ENCODE measurements at regions of chr5 and their contacts with region 1.

Region 1: GRCh38 chr5:138985256-138985655 is 110.1 kb upstream of the LRRTM2 start:
- DNase-seq: peak; percentile 0
- ATAC-seq: no peak
- H3K4me3 ChIP-seq: no peak overlapping the region
- H3K27ac ChIP-seq: no peak overlapping the region
- H3K4me1 ChIP-seq: no peaks in the 10 kb centered on the region
- H3K27me3 ChIP-seq: no peaks in the 10 kb centered on the region
- CTCF ChIP-seq: no peak

Region 2: DNA sequence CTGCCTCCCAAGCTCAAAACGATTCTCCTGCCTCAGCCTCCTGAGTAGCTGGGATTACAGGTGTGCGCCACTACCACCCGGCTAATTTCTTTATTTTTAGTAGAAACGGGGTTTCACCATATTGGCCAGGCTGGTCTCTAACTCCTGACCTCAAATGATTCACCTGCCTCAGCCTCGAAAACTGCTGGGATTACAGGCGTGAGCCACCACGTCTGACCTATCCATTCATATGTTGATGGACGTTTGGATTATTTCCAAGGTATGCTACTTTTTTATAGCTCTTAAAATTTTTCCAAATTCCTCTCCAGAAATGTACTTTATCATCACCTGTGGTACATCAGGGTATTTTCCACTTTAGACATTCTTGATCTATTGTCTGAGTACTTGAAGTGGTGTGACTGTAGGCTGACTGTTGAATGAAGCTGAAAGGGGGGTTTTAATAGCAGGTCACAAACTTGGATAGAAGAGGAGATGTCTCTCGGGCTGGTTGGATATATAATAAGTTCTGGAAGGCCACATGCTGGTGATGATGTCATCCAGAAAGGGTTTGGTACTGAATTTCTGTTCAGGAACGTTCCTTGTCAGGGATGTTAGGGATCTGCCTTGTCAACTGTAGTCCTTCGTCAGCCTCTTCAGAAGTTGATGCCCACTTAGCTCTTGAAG is 224.7 kb before region 1 on chr5:
- CTCF ChIA-PET with region 1: no interaction called
- POLR2A ChIA-PET with region 1: interaction called, 11 read pairs
- intact Hi-C with region 1: no loop called
- DNase-seq: peak; percentile 31
- ATAC-seq: peak; percentile 22; the same call in 1 of the 2 replicates
- H3K4me3 ChIP-seq: no peak overlapping the region
- H3K27ac ChIP-seq: no peak overlapping the region
- H3K4me1 ChIP-seq: peaks cover 7% of the 10 kb centered on the region
- H3K27me3 ChIP-seq: no peaks in the 10 kb centered on the region
- CTCF ChIP-seq: no peak

Region 3: DNA sequence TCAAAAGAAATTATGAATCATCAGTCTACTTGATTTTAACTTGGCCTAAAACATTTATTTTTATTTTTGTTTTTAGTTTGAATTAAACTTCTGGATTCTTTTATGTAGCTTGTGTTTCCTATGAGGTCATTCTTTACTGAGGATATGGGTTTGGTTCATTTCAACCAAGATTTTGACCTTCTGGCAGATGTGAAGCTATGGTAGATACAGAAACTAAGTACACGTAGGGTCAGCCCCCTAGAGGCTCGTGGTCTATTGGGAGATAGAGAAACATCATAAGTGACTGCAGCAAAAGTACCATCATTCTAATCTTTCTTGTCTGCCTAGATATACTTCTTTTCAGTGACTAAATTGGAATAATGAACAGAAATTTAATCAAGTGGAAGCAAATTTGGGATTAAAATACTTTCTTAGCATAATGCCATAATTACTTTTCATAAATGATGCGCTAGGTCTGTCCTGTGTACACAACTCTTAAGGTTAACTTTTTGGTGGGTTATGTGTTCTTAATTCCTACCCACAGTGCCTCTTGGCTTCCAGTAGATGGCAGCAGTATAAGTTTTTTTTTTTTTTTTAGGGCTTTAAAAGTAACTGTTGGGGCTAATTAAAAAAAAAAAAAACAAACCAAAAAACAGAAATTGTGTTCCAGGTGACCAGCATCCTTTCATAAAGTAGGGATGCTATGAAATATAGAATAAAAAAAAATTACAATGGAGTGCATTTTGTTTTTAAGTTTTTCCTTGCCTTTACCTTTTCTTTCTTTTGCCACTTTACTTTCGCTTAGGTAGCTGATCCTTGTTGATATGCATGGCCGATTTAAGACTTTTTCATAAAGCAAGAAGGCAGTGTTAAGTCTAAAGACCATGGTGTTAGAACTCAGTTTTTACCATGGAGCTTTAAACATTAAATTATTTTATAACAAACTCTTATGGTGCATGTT is 160.1 kb before region 1 on chr5:
- CTCF ChIA-PET with region 1: no interaction called
- POLR2A ChIA-PET with region 1: no interaction called
- intact Hi-C with region 1: no loop called
- DNase-seq: no peak
- ATAC-seq: no peak
- H3K4me3 ChIP-seq: no peak overlapping the region
- H3K27ac ChIP-seq: no peak overlapping the region
- H3K4me1 ChIP-seq: no peaks in the 10 kb centered on the region
- H3K27me3 ChIP-seq: no peaks in the 10 kb centered on the region
- CTCF ChIP-seq: no peak

Region 4: DNA sequence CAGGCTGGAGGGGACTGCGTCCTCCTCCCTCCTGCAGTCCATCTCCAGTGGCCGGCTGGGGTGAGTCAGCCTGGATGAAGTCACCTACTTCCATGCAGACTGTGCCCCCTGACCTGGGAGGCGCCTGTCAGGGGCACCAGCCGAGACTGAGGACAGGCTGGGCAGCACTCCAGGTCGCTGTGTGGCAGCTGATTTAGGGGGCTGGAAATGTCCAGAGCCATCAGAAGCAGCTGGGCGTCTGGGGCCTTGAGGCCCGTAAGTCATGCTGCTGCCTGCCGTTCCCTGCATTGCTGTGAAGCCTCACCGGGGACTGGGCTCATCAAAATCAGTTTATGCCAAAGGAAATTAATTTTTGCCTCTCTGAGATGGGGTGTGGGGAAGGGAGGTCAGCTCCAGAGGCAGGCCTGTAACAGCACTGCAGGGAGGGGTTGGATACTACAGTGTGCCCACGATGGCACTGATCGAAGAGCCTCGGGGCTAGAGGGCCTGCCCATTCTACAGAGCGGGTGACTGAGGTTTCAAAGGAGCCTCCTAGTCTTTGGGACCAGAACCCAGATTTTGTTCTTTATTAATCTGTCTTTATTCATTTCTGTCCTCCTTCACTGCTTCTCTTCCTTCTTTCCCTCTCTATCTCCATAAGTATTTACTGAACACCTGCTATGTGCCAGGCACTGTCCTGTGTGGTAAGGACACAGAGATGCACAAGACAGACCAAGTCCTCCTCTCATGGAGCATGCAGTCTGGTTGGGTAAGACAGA is 740.0 kb after region 1 on chr5:
- CTCF ChIA-PET with region 1: no interaction called
- POLR2A ChIA-PET with region 1: no interaction called
- intact Hi-C with region 1: no loop called
- DNase-seq: peak; percentile 35
- ATAC-seq: peak; percentile 92
- H3K4me3 ChIP-seq: no peak overlapping the region
- H3K27ac ChIP-seq: no peak overlapping the region
- H3K4me1 ChIP-seq: no peaks in the 10 kb centered on the region; the same call in 1 of the 2 replicates
- H3K27me3 ChIP-seq: no peaks in the 10 kb centered on the region
- CTCF ChIP-seq: no peak